ENCODE measurements at regions of chr12 and their contacts with region 1.

Region 1: DNA sequence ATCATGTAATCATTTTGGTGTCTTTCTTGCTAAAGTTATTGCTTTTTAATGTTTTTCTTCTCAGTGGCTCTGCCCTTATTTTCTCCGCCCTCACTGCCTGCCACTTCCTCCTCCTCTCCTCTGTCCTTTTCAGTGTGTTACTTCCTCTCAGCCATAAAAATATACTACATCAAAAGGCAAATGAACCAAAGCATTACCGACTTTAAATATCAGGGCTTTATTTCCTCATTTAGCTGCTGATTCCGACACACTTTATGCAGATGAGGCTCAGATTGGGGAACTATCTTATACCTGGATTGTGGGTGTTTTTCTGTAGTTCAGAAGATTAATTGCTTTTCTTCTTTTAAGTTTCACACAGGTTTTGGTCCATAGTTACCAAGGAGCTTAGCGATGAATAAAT is 118.1 kb downstream of the CMAS start:
- DNase-seq: peak; percentile 18
- H3K4me3 Mint-ChIP-seq: peak overlapping the region; percentile 9
- H3K27ac Mint-ChIP-seq: peak overlapping the region; percentile 65
- H3K4me1 Mint-ChIP-seq: peaks cover 40% of the 10 kb centered on the region
- H3K27me3 Mint-ChIP-seq: no peaks in the 10 kb centered on the region

Region 2: GRCh38 chr12:22190969-22191368 is 26.8 kb after region 1 on chr12:
- CTCF ChIA-PET with region 1: no interaction called
- POLR2A ChIA-PET with region 1: no interaction called
- intact Hi-C with region 1: loop called (anchors 1 kb)
- DNase-seq: no peak
- H3K4me3 Mint-ChIP-seq: no peak overlapping the region
- H3K27ac Mint-ChIP-seq: no peak overlapping the region
- H3K4me1 Mint-ChIP-seq: peaks cover 4% of the 10 kb centered on the region
- H3K27me3 Mint-ChIP-seq: no peaks in the 10 kb centered on the region